Dendritic cell treated with granulocyte-macrophage colony-stimulating factor and Interleukin-4, amounts not matched to agents 40 ng/mL and 50 ng/mL, for 4 days (primary cell): ENCODE measurements at regions of chr10 and their contacts with region 1.

Region 1: GRCh38 chr10:97334370-97335175 is at the start of gene FRAT2:
- H3K4me3 Mint-ChIP-seq: peak within 1 kb of the TSS; percentile 91
- H3K27ac Mint-ChIP-seq: peak within 1 kb of the TSS; percentile 98
- H3K4me1 Mint-ChIP-seq: peaks cover 68% of the 10 kb centered on the region
- H3K27me3 Mint-ChIP-seq: no peaks in the 10 kb centered on the region

Region 2: DNA sequence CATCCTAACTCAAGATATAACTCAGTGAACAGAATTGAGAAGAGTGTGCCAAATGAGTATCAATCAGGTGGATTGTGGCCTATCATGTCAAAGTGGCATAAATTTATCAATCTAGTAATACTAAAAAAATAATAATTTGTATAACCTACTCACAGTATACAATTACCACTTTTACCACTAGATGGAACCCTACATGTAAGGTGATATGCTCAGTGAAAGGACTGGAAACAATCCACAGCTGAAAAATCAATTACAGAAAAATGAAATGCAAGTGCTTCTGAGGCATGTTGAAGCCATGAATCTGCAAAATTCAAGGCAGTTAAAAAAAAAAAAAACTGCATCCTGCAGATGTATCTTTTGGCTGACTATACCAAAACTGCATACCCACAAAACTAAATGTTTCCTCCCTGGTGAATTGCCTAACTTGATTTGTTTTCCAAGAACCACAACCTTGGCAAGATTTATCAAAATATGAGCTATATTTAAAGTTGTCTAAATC is 56.0 kb before region 1 on chr10:
- intact Hi-C with region 1: loop called (anchors 5 kb)
- H3K4me3 Mint-ChIP-seq: no peak overlapping the region
- H3K27ac Mint-ChIP-seq: peak overlapping the region; percentile 77
- H3K4me1 Mint-ChIP-seq: peaks cover 16% of the 10 kb centered on the region
- H3K27me3 Mint-ChIP-seq: no peaks in the 10 kb centered on the region

Region 3: DNA sequence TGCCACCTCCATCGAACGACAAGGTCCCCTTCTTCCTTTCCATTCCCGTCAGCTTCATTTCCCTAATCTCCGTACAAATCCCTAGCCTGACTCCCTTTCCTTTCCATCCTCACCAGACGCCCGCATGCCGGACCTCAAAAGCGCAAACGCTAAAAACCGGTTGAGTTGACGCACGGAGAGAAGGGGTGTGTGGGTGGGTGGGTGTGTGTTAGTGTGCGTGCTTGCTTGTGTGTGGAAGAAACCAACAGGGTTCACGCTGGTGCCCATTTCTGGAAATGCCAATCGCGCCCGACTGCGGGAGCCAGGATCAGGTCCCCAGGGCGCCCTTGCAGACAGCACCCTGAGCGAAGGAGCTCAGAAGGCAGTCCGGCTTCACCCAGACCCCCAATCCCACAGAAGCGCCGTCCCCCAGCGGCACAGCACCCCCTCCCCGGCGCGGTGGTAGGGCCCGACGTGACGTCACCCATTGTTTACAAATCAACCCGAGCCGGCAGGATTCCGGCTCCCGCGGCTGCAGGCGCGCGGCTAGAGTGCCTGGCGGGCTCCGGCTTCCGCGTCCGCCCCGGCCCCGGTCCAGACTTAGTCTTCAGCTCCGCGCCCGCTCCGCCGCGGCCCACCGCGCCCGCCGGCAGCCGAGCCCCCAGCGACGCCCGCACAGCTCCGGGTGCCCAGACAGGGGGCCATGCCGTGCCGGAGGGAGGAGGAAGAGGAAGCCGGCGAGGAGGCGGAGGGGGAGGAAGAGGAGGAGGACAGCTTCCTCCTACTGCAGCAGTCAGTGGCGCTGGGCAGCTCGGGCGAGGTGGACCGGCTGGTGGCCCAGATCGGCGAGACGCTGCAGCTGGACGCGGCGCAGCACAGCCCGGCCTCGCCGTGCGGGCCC is 15.6 kb before region 1 on chr10 and contains the start of gene FRAT1:
- intact Hi-C with region 1: loop called (anchors 1 kb)
- H3K4me3 Mint-ChIP-seq: peak within 1 kb of the TSS; percentile 93
- H3K27ac Mint-ChIP-seq: peak within 1 kb of the TSS; percentile 99
- H3K4me1 Mint-ChIP-seq: peaks cover 71% of the 10 kb centered on the region
- H3K27me3 Mint-ChIP-seq: no peaks in the 10 kb centered on the region

Region 4: GRCh38 chr10:97365761-97366351 is 31.3 kb after region 1 on chr10:
- intact Hi-C with region 1: loop called (anchors 5 kb)
- H3K4me3 Mint-ChIP-seq: peak overlapping the region; percentile 69
- H3K27ac Mint-ChIP-seq: peak overlapping the region; percentile 96
- H3K4me1 Mint-ChIP-seq: peaks cover 92% of the 10 kb centered on the region
- H3K27me3 Mint-ChIP-seq: no peaks in the 10 kb centered on the region

Region 5: GRCh38 chr10:97400665-97401454 is 66.3 kb after region 1 on chr10 and contains the start of gene RRP12:
- intact Hi-C with region 1: loop called (anchors 10 kb)
- H3K4me3 Mint-ChIP-seq: peak within 1 kb of the TSS; percentile 94
- H3K27ac Mint-ChIP-seq: peak within 1 kb of the TSS; percentile 98
- H3K4me1 Mint-ChIP-seq: peaks cover 34% of the 10 kb centered on the region
- H3K27me3 Mint-ChIP-seq: no peaks in the 10 kb centered on the region